ENCODE measurements at regions of chr19 and their contacts with region 1.

Region 1: DNA sequence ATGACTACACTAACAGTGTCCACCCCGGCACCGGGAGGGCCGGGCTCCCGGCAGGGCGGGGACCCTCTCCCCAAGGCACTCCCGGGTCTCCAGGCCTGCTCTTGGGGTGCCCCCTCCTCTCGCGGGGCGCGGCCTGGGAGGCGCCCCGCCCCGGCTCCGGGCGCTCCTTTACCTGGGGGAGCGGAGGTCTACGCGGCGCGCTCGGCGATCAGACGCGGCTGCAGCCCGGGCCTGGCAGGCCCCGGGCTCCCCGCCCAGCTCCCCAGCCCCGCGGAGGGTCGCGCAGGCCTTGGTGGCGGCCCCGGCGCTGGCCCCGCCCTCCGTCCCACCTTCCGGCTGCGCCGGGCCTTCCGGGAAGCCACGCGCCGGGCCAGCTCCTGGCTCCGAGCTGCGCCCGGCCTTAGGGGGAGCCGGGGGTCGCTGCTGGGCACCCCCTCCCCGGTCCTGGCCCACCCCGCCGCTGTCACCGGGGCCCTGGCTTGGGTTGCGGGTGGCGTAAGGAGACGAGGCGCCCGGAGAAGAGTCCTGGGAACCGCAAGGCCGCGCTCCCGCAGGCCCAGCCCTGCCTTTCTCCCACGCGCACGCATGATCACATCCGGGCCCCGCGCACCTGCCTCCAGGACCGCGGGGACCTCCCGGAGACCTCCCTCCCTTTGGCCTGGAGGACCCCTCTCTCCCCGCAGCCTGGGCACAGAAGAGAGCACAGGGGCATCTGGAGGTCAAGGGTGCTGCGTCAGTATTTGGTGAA is at the start of gene C19orf12:
- DNase-seq: no peak
- ATAC-seq: peak; percentile 86
- H3K4me3 ChIP-seq: peak within 1 kb of the TSS; percentile 78
- H3K27ac ChIP-seq: peak within 1 kb of the TSS; percentile 79
- H3K4me1 ChIP-seq: peaks cover 11% of the 10 kb centered on the region
- H3K27me3 ChIP-seq: no peaks in the 10 kb centered on the region
- CTCF ChIP-seq: no peak
- EP300 ChIP-seq: no peak
- POLR2A ChIP-seq: peak; percentile 91
- RAD21 ChIP-seq: no peak
- polyA plus RNA-seq, gene C19orf12: 2.3 to 6.6 TPM

Region 2: DNA sequence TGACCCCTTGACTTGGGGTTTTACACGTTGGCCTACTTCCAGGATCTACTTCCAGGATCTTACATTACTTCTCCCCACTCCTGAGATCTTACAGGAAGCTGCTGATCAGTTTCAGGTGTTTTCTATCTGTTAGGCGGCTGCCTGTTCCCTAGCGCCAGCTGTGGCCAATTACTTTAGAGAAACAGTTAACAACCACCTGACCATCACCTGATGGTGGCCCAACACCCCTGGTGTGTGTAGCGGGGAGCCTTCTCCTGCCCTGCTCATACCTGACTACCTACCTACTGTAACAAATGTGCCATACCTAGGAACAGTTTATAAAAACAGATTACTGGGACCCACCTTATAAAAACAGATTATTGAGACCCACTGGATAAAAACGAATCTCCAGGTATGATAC is 111.8 kb before region 1 on chr19:
- CTCF ChIA-PET with region 1: interaction called, 237 read pairs
- POLR2A ChIA-PET with region 1: interaction called, 17 read pairs
- RAD21 ChIA-PET with region 1: interaction called, 34 read pairs
- SMC1A ChIA-PET with region 1: interaction called, 18 read pairs
- in situ Hi-C with region 1: loop called (anchors 10 kb)
- intact Hi-C with region 1: loop called (anchors 1 kb)
- DNase-seq: no peak
- ATAC-seq: no peak
- H3K4me3 ChIP-seq: no peak overlapping the region
- H3K27ac ChIP-seq: no peak overlapping the region
- H3K4me1 ChIP-seq: peaks cover 6% of the 10 kb centered on the region
- H3K27me3 ChIP-seq: no peaks in the 10 kb centered on the region
- CTCF ChIP-seq: no peak
- EP300 ChIP-seq: no peak
- POLR2A ChIP-seq: no peak
- RAD21 ChIP-seq: no peak

Region 3: GRCh38 chr19:29665215-29665825 is 49.8 kb before region 1 on chr19 and contains the start of gene PLEKHF1:
- CTCF ChIA-PET with region 1: interaction called, 111 read pairs
- POLR2A ChIA-PET with region 1: interaction called, 16 read pairs
- RAD21 ChIA-PET with region 1: interaction called, 78 read pairs
- SMC1A ChIA-PET with region 1: interaction called, 20 read pairs
- in situ Hi-C with region 1: no loop called
- intact Hi-C with region 1: loop called (anchors 2 kb)
- DNase-seq: no peak
- ATAC-seq: peak; percentile 94
- H3K4me3 ChIP-seq: peak within 1 kb of the TSS; percentile 92
- H3K27ac ChIP-seq: peak within 1 kb of the TSS; percentile 84
- H3K4me1 ChIP-seq: peaks cover 33% of the 10 kb centered on the region
- H3K27me3 ChIP-seq: no peaks in the 10 kb centered on the region
- CTCF ChIP-seq: peak in 1 of 3 experiments; percentile 51; a peak in 2 of 6 replicates
- EP300 ChIP-seq: no peak
- POLR2A ChIP-seq: peak; percentile 73
- RAD21 ChIP-seq: peak; percentile 51; the same call in 1 of the 2 replicates
- polyA plus RNA-seq, gene PLEKHF1: 0.10 to 0.31 TPM

Region 4: GRCh38 chr19:29694669-29695627 is 20.2 kb before region 1 on chr19:
- CTCF ChIA-PET with region 1: interaction called, 41 read pairs
- POLR2A ChIA-PET with region 1: interaction called, 3 read pairs
- RAD21 ChIA-PET with region 1: interaction called, 25 read pairs
- SMC1A ChIA-PET with region 1: interaction called, 17 read pairs
- in situ Hi-C with region 1: no loop called
- intact Hi-C with region 1: loop called (anchors 1 kb)
- DNase-seq: no peak
- ATAC-seq: peak; percentile 100
- H3K4me3 ChIP-seq: no peak overlapping the region
- H3K27ac ChIP-seq: no peak overlapping the region
- H3K4me1 ChIP-seq: no peaks in the 10 kb centered on the region; the same call in 1 of the 2 replicates
- H3K27me3 ChIP-seq: no peaks in the 10 kb centered on the region
- CTCF ChIP-seq: peak; percentile 85 to 96 (median 95); a peak in 5 of 6 replicates
- EP300 ChIP-seq: no peak
- POLR2A ChIP-seq: no peak
- RAD21 ChIP-seq: peak; percentile 76

Region 5: DNA sequence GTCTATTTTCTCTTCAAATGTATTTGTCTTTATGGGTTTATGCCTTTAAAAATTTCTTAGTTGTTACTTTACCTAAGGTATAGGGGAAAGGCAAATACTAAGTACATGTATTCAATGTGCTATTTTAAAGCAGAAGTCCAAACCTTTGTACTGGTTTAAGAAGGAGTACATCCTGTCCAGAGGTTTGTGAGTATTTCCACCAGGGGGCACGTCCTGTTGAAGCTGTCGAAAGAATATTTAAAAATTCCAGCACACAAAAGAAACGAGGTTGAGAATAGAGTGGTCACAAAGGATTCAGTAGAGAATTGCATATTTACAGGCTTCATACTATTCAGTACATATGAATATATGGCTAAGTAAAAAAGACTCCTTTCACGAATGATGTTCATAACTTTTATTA is 286.7 kb after region 1 on chr19:
- CTCF ChIA-PET with region 1: no interaction called
- POLR2A ChIA-PET with region 1: no interaction called
- RAD21 ChIA-PET with region 1: no interaction called
- SMC1A ChIA-PET with region 1: no interaction called
- in situ Hi-C with region 1: no loop called
- intact Hi-C with region 1: no loop called
- DNase-seq: no peak
- ATAC-seq: no peak
- H3K4me3 ChIP-seq: no peak overlapping the region
- H3K27ac ChIP-seq: no peak overlapping the region
- H3K4me1 ChIP-seq: no peaks in the 10 kb centered on the region
- H3K27me3 ChIP-seq: no peaks in the 10 kb centered on the region
- CTCF ChIP-seq: no peak
- EP300 ChIP-seq: no peak
- POLR2A ChIP-seq: no peak
- RAD21 ChIP-seq: no peak

Measured in GM12878 (cell line).